ENCODE measurements at regions of chr2 and their contacts with region 1.

Region 1: GRCh38 chr2:99066075-99066958 is 75.2 kb upstream of the C2orf15 start:
- DNase-seq: peak in 3 of 9 experiments; percentile 29 to 75 (median 45)
- ATAC-seq: peak; percentile 93
- H3K4me3 ChIP-seq: no peak overlapping the region
- H3K4me3 Mint-ChIP-seq: no peak overlapping the region
- H3K27ac ChIP-seq: peak overlapping the region in 1 of 2 experiments; percentile 70
- H3K27ac Mint-ChIP-seq: no peak overlapping the region
- H3K4me1 ChIP-seq: peaks cover 13% of the 10 kb centered on the region
- H3K4me1 Mint-ChIP-seq: peaks cover 2% of the 10 kb centered on the region
- H3K27me3 ChIP-seq: no peaks in the 10 kb centered on the region
- H3K27me3 Mint-ChIP-seq: no peaks in the 10 kb centered on the region
- CTCF ChIP-seq: no peak

Region 2: GRCh38 chr2:98568881-98569793 is 497.2 kb before region 1 on chr2:
- CTCF ChIA-PET with region 1: interaction called, 4 read pairs
- POLR2A ChIA-PET with region 1: no interaction called
- intact Hi-C with region 1: loop called in 1 of 2 experiments (anchors 2 kb)
- DNase-seq: peak; percentile 49 to 84 (median 71)
- ATAC-seq: peak; percentile 81
- H3K4me3 ChIP-seq: no peak overlapping the region
- H3K4me3 Mint-ChIP-seq: no peak overlapping the region
- H3K27ac ChIP-seq: peak overlapping the region in 1 of 2 experiments; percentile 14
- H3K27ac Mint-ChIP-seq: peak overlapping the region; percentile 75
- H3K4me1 ChIP-seq: no peaks in the 10 kb centered on the region
- H3K4me1 Mint-ChIP-seq: no peaks in the 10 kb centered on the region
- H3K27me3 ChIP-seq: no peaks in the 10 kb centered on the region
- H3K27me3 Mint-ChIP-seq: no peaks in the 10 kb centered on the region
- CTCF ChIP-seq: peak; percentile 91

Region 3: DNA sequence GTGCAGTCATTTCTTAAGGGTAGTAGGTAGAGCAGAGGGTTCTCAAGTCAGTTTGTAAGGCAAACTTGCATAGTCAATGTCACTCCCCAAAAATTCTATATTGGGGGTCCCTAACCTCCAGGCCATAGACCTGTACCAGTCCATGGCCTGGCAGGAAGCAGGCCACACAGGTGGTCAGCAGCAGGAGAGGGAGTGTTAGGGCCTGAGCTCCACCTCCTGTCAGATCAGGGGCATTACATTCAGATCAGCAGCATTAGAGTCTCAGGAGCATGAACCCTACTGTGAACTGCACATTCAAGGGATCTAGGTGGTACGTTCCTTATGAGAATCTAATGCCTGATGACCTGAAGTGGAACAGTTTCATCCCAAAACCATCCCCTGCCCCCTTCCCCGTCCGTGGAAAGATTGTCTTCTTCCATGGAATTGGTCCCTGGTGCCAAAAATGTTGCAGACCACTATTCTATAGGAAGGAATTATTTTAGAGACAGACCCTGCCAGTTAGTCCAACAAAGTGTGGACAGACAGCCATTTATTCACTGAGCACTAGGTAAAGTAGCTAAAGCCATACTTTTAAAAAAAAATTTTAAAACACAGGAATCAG is 464.7 kb before region 1 on chr2:
- CTCF ChIA-PET with region 1: no interaction called
- POLR2A ChIA-PET with region 1: no interaction called
- intact Hi-C with region 1: loop called in 1 of 2 experiments (anchors 10 kb)
- DNase-seq: peak in 2 of 9 experiments; percentile 25 to 46
- ATAC-seq: peak; percentile 36
- H3K4me3 ChIP-seq: no peak overlapping the region
- H3K4me3 Mint-ChIP-seq: no peak overlapping the region
- H3K27ac ChIP-seq: no peak overlapping the region
- H3K27ac Mint-ChIP-seq: peak overlapping the region; percentile 37
- H3K4me1 ChIP-seq: peaks cover 12% of the 10 kb centered on the region
- H3K4me1 Mint-ChIP-seq: peaks cover 31% of the 10 kb centered on the region
- H3K27me3 ChIP-seq: no peaks in the 10 kb centered on the region
- H3K27me3 Mint-ChIP-seq: no peaks in the 10 kb centered on the region
- CTCF ChIP-seq: peak; percentile 41

Region 4: GRCh38 chr2:98634401-98635092 is 431.8 kb before region 1 on chr2:
- CTCF ChIA-PET with region 1: no interaction called
- POLR2A ChIA-PET with region 1: no interaction called
- intact Hi-C with region 1: loop called in 1 of 2 experiments (anchors 5 kb)
- DNase-seq: peak in 6 of 9 experiments; percentile 26 to 84 (median 64)
- ATAC-seq: peak; percentile 52
- H3K4me3 ChIP-seq: no peak overlapping the region
- H3K4me3 Mint-ChIP-seq: peak overlapping the region; percentile 63
- H3K27ac ChIP-seq: peak overlapping the region; percentile 12 to 87
- H3K27ac Mint-ChIP-seq: peak overlapping the region; percentile 96
- H3K4me1 ChIP-seq: peaks cover 49% of the 10 kb centered on the region
- H3K4me1 Mint-ChIP-seq: peaks cover 48% of the 10 kb centered on the region
- H3K27me3 ChIP-seq: no peaks in the 10 kb centered on the region
- H3K27me3 Mint-ChIP-seq: no peaks in the 10 kb centered on the region
- CTCF ChIP-seq: peak; percentile 54

Region 5: GRCh38 chr2:98903767-98904485 is 162.4 kb before region 1 on chr2:
- CTCF ChIA-PET with region 1: no interaction called
- POLR2A ChIA-PET with region 1: no interaction called
- intact Hi-C with region 1: no loop called
- DNase-seq: peak in 1 of 9 experiments; percentile 31
- ATAC-seq: no peak
- H3K4me3 ChIP-seq: no peak overlapping the region
- H3K4me3 Mint-ChIP-seq: no peak overlapping the region
- H3K27ac ChIP-seq: no peak overlapping the region
- H3K27ac Mint-ChIP-seq: no peak overlapping the region
- H3K4me1 ChIP-seq: peaks cover 9% of the 10 kb centered on the region
- H3K4me1 Mint-ChIP-seq: peaks cover 4% of the 10 kb centered on the region
- H3K27me3 ChIP-seq: no peaks in the 10 kb centered on the region
- H3K27me3 Mint-ChIP-seq: peaks cover 5% of the 10 kb centered on the region
- CTCF ChIP-seq: no peak

Measured in CD8-positive, alpha-beta T cell (primary cell).